Panc1 (cell line): ENCODE measurements at regions of chr12 and their contacts with region 1.

Region 1: DNA sequence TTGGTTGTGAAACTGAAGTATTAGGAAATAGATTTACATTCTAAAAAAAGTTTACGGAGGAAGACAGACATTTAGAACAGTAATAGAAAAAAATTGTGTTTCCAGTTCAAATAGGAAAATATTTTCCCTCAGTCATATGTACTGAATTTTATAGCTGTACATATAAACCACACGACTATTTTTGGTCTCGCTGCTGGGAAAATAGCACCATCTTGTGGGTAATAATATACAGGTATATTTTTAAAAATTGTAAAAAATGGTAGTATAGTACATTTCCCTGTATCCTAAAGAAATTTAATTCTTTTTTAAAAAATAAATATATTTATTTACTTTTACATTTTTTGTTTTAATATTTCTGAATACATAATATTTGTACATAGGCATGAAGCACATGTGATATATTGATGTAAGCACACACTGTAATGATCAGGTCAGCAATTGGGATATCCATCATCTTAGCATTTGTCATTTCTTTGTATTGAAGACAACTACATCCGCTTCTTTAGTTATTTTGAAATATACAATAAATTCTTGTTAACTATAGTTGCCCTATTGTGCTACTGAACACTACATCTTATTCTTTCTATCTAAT is 168.6 kb downstream of the ALX1 start:
- DNase-seq: no peak
- ATAC-seq: no peak
- H3K4me3 ChIP-seq: no peak overlapping the region
- H3K27ac ChIP-seq: no peak overlapping the region
- H3K4me1 ChIP-seq: no peaks in the 10 kb centered on the region
- H3K27me3 ChIP-seq: no peaks in the 10 kb centered on the region
- CTCF ChIP-seq: peak; percentile 28; the same call in 1 of the 2 replicates

Region 2: DNA sequence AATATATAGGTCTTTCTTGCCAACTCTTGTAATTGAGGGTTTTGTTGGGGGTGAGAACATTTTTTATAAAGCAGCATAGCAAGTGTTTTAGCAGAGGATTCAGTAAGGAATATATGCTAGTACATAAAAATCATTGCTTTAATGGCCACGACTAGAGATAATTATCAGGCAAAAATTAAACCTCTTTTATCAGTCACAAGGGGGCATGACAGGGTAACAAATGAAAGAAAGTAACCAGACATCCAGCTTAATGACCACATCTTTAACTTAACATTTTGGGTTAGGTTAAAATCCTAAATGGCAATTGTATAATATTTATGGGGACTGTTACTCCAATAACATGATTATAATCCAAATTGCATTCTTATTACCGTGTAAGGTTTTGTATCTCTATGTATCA is 292.9 kb before region 1 on chr12:
- CTCF ChIA-PET with region 1: no interaction called
- POLR2A ChIA-PET with region 1: no interaction called
- in situ Hi-C with region 1: no loop called
- intact Hi-C with region 1: loop called (anchors 5 kb)
- DNase-seq: no peak
- ATAC-seq: no peak
- H3K4me3 ChIP-seq: no peak overlapping the region
- H3K27ac ChIP-seq: no peak overlapping the region
- H3K4me1 ChIP-seq: no peaks in the 10 kb centered on the region
- H3K27me3 ChIP-seq: no peaks in the 10 kb centered on the region
- CTCF ChIP-seq: peak; percentile 19; the same call in 1 of the 2 replicates

Region 3: GRCh38 chr12:85310456-85311076 is 138.1 kb before region 1 on chr12:
- CTCF ChIA-PET with region 1: no interaction called
- POLR2A ChIA-PET with region 1: no interaction called
- in situ Hi-C with region 1: no loop called
- intact Hi-C with region 1: no loop called
- DNase-seq: no peak
- ATAC-seq: no peak
- H3K4me3 ChIP-seq: no peak overlapping the region
- H3K27ac ChIP-seq: no peak overlapping the region
- H3K4me1 ChIP-seq: no peaks in the 10 kb centered on the region
- H3K27me3 ChIP-seq: no peaks in the 10 kb centered on the region
- CTCF ChIP-seq: peak; percentile 46; the same call in 1 of the 2 replicates

Region 4: DNA sequence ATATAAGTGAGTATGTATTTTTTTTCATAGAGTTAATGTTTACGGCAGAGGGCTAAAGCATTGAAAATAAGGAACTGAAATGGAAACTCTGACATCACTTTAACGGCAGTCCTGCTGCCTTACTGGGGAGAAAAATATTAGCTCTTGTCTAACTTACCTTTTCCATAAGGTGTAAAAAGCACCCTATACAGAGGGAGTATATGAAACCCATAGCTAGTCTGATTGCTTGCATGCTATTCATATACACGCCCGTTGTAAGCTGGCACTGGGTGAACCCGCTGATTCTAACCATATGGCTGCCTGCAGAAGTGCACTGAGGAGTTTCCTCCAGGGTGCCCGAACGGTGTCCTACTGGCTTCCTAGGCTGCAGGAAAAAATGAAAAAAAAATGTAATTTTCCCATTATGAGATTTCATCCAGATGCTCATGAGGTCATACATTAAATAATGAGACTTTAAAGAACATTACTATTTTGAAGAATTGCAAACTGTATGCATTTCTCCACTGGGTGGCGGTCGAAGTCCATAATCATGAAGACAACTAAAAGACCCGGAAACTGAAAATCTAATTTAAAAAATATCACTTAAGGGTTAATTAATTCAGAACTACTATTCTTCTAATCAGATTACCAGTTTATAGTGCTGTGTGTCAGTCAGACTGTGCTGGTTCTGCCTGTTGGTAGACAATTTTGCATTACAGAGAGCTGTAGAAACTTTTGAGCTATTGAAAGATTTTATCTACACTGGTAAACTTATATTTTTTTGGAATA is 23.9 kb before region 1 on chr12:
- CTCF ChIA-PET with region 1: no interaction called
- POLR2A ChIA-PET with region 1: no interaction called
- in situ Hi-C with region 1: no loop called
- intact Hi-C with region 1: loop called (anchors 1 kb)
- DNase-seq: no peak
- ATAC-seq: no peak; the same call in 1 of the 2 replicates
- H3K4me3 ChIP-seq: no peak overlapping the region
- H3K27ac ChIP-seq: no peak overlapping the region
- H3K4me1 ChIP-seq: no peaks in the 10 kb centered on the region
- H3K27me3 ChIP-seq: no peaks in the 10 kb centered on the region
- CTCF ChIP-seq: peak; percentile 72

Region 5: GRCh38 chr12:85688837-85689236 is 240.2 kb after region 1 on chr12:
- CTCF ChIA-PET with region 1: no interaction called
- POLR2A ChIA-PET with region 1: no interaction called
- in situ Hi-C with region 1: no loop called
- intact Hi-C with region 1: no loop called
- DNase-seq: no peak
- ATAC-seq: no peak
- H3K4me3 ChIP-seq: no peak overlapping the region
- H3K27ac ChIP-seq: no peak overlapping the region
- H3K4me1 ChIP-seq: no peaks in the 10 kb centered on the region
- H3K27me3 ChIP-seq: no peaks in the 10 kb centered on the region
- CTCF ChIP-seq: no peak